ENCODE measurements at regions of chr6 and their contacts with region 1.

Region 1: DNA sequence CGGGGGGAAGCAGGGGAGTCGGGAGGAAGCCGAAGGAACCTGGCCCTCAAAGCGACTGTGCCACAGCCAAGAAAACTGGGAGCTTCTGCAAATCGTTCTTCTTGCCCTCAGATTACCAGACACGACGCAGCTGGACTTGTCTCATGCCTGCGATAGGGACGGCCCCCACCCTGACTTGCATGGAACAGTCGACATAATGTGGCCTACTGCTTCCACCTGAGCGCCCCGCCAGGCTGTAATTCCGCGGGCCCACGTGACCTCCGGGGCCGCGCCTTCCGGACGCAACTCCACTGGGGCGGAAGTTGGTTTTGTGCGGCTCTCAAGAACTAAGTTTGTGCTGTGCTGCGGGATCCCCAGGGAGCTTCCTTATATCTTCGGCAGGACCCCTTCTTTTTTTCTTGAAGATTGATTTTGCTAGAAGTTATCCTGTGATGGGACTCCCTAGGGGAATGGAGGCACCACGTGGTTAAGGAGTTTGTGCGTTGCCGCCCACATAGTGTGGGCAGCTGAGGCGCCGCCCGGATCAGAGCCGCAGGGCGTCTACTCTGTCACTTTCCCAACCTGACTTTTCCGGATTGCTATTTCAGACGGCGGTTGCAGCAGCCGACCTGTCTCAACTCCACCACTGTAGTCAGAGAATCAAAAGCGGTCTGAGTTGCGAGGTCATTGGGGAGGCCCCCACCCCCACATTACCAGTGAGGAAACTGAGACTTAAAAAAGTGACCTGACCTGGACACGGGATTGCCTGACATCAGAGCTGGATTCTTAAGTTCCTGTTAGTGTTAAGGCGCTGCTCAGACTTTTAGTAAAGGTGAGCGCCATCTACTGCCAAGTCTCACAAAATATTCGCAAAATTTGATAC is 540 bp upstream of the CD164 start:
- DNase-seq: peak; percentile 88
- ATAC-seq: peak; percentile 82
- H3K4me3 ChIP-seq: peak overlapping the region; percentile 95 to 99 (median 99)
- H3K27ac ChIP-seq: peak overlapping the region; percentile 98
- H3K4me1 ChIP-seq: peaks cover 36% of the 10 kb centered on the region
- H3K27me3 ChIP-seq: no peaks in the 10 kb centered on the region; a peak in 2 of 5 replicates
- CTCF ChIP-seq: peak; percentile 65
- EP300 ChIP-seq: peak in 1 of 2 experiments; percentile 20; a peak in 1 of 4 replicates
- POLR2A ChIP-seq: peak in 1 of 2 experiments; percentile 55; a peak in 2 of 4 replicates
- RAD21 ChIP-seq: peak; percentile 34; the same call in 1 of the 2 replicates

Region 2: GRCh38 chr6:109095027-109095834 is 287.6 kb before region 1 on chr6 and contains the start of gene CEP57L1:
- CTCF ChIA-PET with region 1: no interaction called
- POLR2A ChIA-PET with region 1: interaction called, 13 read pairs
- in situ Hi-C with region 1: no loop called
- intact Hi-C with region 1: loop called (anchors 5 kb)
- DNase-seq: peak; percentile 93
- ATAC-seq: peak; percentile 81
- H3K4me3 ChIP-seq: peak within 1 kb of the TSS; percentile 74 to 98 (median 89)
- H3K27ac ChIP-seq: peak within 1 kb of the TSS; percentile 96
- H3K4me1 ChIP-seq: peaks cover 45% of the 10 kb centered on the region
- H3K27me3 ChIP-seq: no peaks in the 10 kb centered on the region; a peak in 1 of 5 replicates
- CTCF ChIP-seq: no peak
- EP300 ChIP-seq: no peak
- POLR2A ChIP-seq: peak; percentile 52 to 87; a peak in 3 of 4 replicates
- RAD21 ChIP-seq: no peak
- total RNA-seq, gene CEP57L1: 15.5 and 20.7 TPM in 2 replicates

Region 3: GRCh38 chr6:109187399-109188114 is 195.2 kb before region 1 on chr6:
- CTCF ChIA-PET with region 1: interaction called, 3 read pairs
- POLR2A ChIA-PET with region 1: interaction called, 10 read pairs
- in situ Hi-C with region 1: loop called (anchors 5 kb)
- intact Hi-C with region 1: loop called (anchors 1 kb)
- DNase-seq: peak; percentile 25
- ATAC-seq: peak; percentile 68; the same call in 2 of the 3 replicates
- H3K4me3 ChIP-seq: no peak overlapping the region
- H3K27ac ChIP-seq: no peak overlapping the region
- H3K4me1 ChIP-seq: peaks cover 7% of the 10 kb centered on the region
- H3K27me3 ChIP-seq: no peaks in the 10 kb centered on the region
- CTCF ChIP-seq: peak; percentile 84
- EP300 ChIP-seq: no peak
- POLR2A ChIP-seq: no peak
- RAD21 ChIP-seq: peak; percentile 83

Region 4: DNA sequence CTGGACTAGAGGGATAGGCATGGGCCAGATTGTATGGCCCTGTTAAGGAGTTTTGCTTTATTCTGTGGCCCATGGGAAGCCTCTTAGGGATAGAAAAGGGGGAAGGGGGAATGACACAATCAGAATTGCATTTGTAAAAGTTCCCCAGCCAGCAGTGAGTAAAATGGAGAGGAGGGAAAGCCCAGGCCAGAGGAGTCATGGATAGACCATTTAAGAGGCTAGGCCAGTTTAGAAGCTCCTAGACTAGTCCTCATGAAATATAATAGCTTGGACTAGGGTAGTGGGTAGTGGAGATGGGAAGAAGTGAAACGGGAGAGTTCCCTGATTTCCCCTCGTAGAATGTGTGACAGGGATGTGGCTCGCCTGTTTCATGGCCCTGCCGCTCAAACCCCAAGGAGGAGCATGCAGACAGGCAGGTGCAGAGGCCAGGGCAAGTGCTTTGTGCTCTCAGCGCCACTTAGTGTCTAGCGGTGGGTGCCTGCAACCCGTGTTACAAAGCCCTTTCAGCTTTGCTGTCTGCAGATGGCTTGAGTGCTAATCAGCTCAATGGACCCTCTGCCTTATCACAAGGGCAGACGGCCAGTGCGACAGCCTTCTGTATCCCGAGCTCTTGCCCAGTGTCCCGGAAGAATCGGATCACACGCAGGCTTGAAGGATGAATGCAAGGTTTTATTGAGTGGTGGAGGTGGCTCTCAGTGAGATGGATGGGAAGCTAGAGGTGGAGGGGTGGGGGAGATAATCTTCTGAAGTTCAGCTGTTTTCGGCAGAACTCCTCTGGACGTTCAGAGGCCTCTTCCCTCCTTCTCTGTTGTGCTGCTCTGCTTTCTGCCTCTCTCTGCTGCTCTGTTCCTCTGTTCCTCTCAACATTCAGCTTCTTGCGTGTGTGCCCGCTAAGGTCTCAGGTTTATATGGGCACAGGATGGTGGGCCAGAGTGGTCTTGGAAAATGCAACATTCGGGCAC is 146.4 kb before region 1 on chr6:
- CTCF ChIA-PET with region 1: no interaction called
- POLR2A ChIA-PET with region 1: interaction called, 4 read pairs
- in situ Hi-C with region 1: no loop called
- intact Hi-C with region 1: loop called (anchors 1 kb)
- DNase-seq: peak; percentile 46
- ATAC-seq: peak; percentile 98
- H3K4me3 ChIP-seq: peak overlapping the region in 1 of 3 experiments; percentile 11; a peak in 1 of 6 replicates
- H3K27ac ChIP-seq: no peak overlapping the region
- H3K4me1 ChIP-seq: peaks cover 41% of the 10 kb centered on the region
- H3K27me3 ChIP-seq: no peaks in the 10 kb centered on the region
- CTCF ChIP-seq: peak; percentile 92
- EP300 ChIP-seq: no peak
- POLR2A ChIP-seq: no peak
- RAD21 ChIP-seq: peak; percentile 70

Region 5: GRCh38 chr6:109252261-109253041 is 130.4 kb before region 1 on chr6:
- CTCF ChIA-PET with region 1: no interaction called
- POLR2A ChIA-PET with region 1: interaction called, 21 read pairs
- in situ Hi-C with region 1: no loop called
- intact Hi-C with region 1: no loop called
- DNase-seq: peak; percentile 41
- ATAC-seq: no peak
- H3K4me3 ChIP-seq: no peak overlapping the region
- H3K27ac ChIP-seq: no peak overlapping the region
- H3K4me1 ChIP-seq: peaks cover 27% of the 10 kb centered on the region
- H3K27me3 ChIP-seq: no peaks in the 10 kb centered on the region; a peak in 1 of 5 replicates
- CTCF ChIP-seq: no peak
- EP300 ChIP-seq: no peak; a peak in 1 of 4 replicates
- POLR2A ChIP-seq: no peak
- RAD21 ChIP-seq: no peak

Region 6: DNA sequence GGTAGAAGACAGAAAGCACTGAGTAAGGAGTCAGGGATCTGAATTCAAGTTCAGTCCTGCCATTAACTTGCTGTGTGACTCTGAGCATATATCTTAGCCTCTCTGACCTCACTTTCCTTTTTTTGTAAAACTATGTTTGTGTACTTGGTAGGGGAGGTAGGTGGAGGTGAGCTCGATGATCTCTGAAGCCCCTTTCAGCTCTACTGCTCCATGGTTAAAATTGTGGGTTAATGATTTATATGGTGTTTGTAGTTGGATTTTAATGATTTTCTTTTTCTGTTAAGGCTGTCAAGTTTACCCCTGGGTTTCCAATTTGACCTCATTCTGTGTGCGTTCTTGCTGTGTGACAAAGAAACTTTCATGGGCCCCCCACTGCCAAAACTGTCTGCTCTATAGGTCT is 124.7 kb before region 1 on chr6:
- CTCF ChIA-PET with region 1: no interaction called
- POLR2A ChIA-PET with region 1: no interaction called
- in situ Hi-C with region 1: no loop called
- intact Hi-C with region 1: loop called (anchors 2 kb)
- DNase-seq: peak; percentile 34
- ATAC-seq: peak; percentile 79
- H3K4me3 ChIP-seq: no peak overlapping the region
- H3K27ac ChIP-seq: no peak overlapping the region
- H3K4me1 ChIP-seq: peaks cover 23% of the 10 kb centered on the region
- H3K27me3 ChIP-seq: no peaks in the 10 kb centered on the region
- CTCF ChIP-seq: no peak
- EP300 ChIP-seq: no peak
- POLR2A ChIP-seq: no peak
- RAD21 ChIP-seq: no peak

Region 7: DNA sequence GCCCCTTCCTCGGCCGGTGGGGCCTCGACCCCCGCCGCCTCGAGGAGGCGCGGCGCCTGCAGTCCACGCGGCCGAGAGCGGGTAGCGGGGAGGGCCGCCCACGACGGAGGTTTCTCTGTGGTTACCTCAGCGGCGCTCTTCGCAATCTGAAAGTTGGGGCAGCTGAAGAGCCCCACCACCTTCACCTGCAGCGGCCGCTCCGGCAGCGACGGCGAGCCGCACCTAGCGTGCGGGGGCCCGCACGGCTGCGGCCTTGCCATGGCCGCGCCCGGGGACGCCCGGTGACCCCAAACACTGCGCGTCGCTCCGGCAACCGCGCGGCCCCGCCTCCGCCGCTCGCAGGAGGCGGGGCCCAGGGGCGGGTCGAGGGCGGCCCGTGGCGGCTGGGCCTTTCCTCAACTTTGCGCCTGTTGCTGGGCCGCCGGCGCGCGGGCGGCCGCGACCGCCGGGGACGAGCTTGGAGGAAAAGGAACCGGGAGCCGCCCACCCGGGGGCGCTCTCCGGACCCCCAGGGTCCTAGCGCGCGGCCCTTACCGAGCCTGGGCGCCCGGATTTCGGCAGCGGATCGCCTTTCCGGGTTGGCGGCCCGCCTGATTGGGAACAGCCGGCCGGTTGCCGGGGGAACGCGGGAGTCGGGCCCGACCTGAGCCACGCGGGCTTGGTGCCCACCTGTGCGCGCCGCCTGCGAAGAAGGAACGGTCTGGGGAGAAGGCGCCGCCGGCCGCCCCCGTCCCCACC is 57.7 kb after region 1 on chr6 and contains the starts of genes PPIL6 and SMPD2:
- CTCF ChIA-PET with region 1: no interaction called
- POLR2A ChIA-PET with region 1: interaction called, 29 read pairs
- in situ Hi-C with region 1: loop called (anchors 5 kb)
- intact Hi-C with region 1: loop called (anchors 2 kb)
- DNase-seq: peak; percentile 77
- ATAC-seq: peak; percentile 89
- H3K4me3 ChIP-seq: peak within 1 kb of the TSS; percentile 92 to 100 (median 94)
- H3K27ac ChIP-seq: peak within 1 kb of the TSS; percentile 80
- H3K4me1 ChIP-seq: peaks cover 25% of the 10 kb centered on the region
- H3K27me3 ChIP-seq: no peaks in the 10 kb centered on the region; a peak in 1 of 5 replicates
- CTCF ChIP-seq: peak; percentile 59
- EP300 ChIP-seq: no peak; a peak in 1 of 4 replicates
- POLR2A ChIP-seq: peak; percentile 18 to 68; a peak in 2 of 4 replicates
- RAD21 ChIP-seq: peak; percentile 40
- total RNA-seq, gene PPIL6: 0.22 TPM in 1 of 2 replicates, not detected in the other
- total RNA-seq, gene SMPD2: 6.7 and 10.6 TPM in 2 replicates

Measured in HepG2 (cell line).